ENCODE measurements at regions of chr14 and their contacts with region 1.

Region 1: GRCh38 chr14:72926292-72927028 is at the start of gene DCAF4:
- DNase-seq: peak; percentile 100
- H3K4me3 ChIP-seq: peak within 1 kb of the TSS; percentile 96
- H3K27ac ChIP-seq: peak within 1 kb of the TSS; percentile 87
- H3K27me3 ChIP-seq: no peaks in the 10 kb centered on the region
- CTCF ChIP-seq: no peak

Region 2: DNA sequence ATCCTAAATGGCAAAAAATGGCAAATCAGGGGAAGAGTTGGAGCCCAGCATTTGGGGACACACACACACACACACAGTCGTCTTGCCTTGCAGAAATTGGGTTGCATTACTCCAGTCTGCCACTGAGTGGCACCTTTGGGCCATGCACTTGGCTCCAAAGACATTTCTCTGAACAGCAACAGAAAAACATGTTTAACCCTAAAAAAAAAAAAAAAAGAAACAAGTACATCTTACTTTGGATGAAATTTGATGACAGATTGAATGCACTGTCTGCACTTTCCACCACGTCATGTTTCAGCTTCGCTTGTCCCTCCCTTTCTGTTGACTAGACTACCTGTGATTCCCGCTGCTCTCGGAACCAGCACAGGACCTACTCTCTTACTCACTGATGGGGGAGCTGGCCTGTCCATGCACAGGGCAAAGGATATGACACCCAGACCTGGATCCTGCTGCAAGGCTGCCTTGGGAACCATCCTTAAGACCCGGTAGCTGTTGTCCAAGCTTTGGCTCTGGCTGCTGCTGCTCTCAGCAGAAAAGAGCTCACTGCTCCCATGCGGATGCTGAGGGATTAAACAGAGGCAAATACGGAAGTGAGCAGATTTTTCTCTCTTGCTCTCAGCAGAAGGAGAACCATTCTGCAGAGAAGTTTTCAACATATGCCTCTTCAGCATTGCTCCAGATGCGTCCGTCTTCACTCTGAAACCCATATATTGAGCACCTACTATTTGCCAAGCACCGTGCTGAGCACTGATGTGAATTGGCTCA is 409.3 kb before region 1 on chr14:
- in situ Hi-C with region 1: loop called (anchors 25 kb)
- DNase-seq: peak; percentile 81
- H3K4me3 ChIP-seq: no peak overlapping the region
- H3K27ac ChIP-seq: no peak overlapping the region
- H3K27me3 ChIP-seq: no peaks in the 10 kb centered on the region
- CTCF ChIP-seq: peak; percentile 93

Region 3: DNA sequence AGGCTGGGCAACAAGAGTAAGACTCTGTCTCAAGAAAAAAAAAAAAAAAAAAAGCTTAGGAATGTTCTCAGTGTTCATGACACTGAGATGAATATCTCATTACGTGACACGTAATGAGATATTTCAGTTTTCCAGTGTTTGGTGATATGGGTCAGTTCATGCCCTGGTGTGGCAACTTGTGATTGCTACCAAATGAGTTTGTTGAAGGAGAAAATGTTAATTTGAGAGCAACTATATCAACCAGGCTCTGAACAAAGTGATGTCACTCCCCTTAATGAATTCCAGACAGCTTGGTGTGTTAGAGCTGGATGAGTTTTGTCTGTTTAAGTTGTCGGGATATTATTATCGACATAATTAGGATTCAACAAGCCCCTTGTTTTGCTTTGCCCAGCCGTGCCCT is 244.3 kb before region 1 on chr14:
- in situ Hi-C with region 1: no loop called
- DNase-seq: peak; percentile 15
- H3K4me3 ChIP-seq: no peak overlapping the region
- H3K27ac ChIP-seq: peak overlapping the region; percentile 33
- H3K27me3 ChIP-seq: no peaks in the 10 kb centered on the region
- CTCF ChIP-seq: no peak